ENCODE measurements at regions of chr10 and their contacts with region 1.

Region 1: DNA sequence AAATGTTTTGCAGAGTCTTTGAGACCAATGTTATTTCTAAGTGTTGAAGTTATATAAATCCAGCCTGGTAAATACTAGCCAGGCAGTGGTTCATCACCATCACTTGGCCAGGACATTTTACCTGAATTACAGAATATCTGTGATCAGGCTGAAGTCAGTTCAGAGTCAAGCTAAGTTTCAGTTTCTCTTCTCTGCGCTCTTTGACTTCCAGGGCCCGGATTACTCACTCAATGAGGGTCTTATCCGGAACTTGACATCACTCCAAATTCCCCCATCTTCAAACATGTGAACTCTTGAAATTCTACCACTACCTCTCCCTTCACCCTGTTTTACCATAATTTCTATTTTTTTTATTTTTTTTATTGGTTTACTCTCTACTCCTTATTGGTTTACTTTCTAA is 36.6 kb upstream of the CCAR1 start:
- DNase-seq: no peak
- ATAC-seq: no peak
- H3K4me3 ChIP-seq: no peak overlapping the region
- H3K27ac ChIP-seq: no peak overlapping the region
- H3K4me1 ChIP-seq: no peaks in the 10 kb centered on the region
- H3K27me3 ChIP-seq: no peaks in the 10 kb centered on the region
- CTCF ChIP-seq: no peak

Region 2: GRCh38 chr10:68633816-68634466 is 50.5 kb before region 1 on chr10:
- CTCF ChIA-PET with region 1: no interaction called
- POLR2A ChIA-PET with region 1: no interaction called
- intact Hi-C with region 1: no loop called
- DNase-seq: no peak
- ATAC-seq: peak; percentile 79
- H3K4me3 ChIP-seq: no peak overlapping the region
- H3K27ac ChIP-seq: no peak overlapping the region
- H3K4me1 ChIP-seq: no peaks in the 10 kb centered on the region
- H3K27me3 ChIP-seq: no peaks in the 10 kb centered on the region
- CTCF ChIP-seq: no peak

Region 3: GRCh38 chr10:68800196-68800595 is 115.8 kb after region 1 on chr10:
- CTCF ChIA-PET with region 1: interaction called, 10 read pairs
- POLR2A ChIA-PET with region 1: no interaction called
- intact Hi-C with region 1: no loop called
- DNase-seq: no peak
- ATAC-seq: no peak
- H3K4me3 ChIP-seq: no peak overlapping the region
- H3K27ac ChIP-seq: no peak overlapping the region
- H3K4me1 ChIP-seq: 0 out of 2 replicates have a peak, but pooled peaks cover 3% of the 10 kb centered on the region
- H3K27me3 ChIP-seq: no peaks in the 10 kb centered on the region
- CTCF ChIP-seq: no peak

Measured in PC-3 (cell line).